MCF 10A (cell line): ENCODE measurements at regions of chr12 and their contacts with region 1.

Region 1: DNA sequence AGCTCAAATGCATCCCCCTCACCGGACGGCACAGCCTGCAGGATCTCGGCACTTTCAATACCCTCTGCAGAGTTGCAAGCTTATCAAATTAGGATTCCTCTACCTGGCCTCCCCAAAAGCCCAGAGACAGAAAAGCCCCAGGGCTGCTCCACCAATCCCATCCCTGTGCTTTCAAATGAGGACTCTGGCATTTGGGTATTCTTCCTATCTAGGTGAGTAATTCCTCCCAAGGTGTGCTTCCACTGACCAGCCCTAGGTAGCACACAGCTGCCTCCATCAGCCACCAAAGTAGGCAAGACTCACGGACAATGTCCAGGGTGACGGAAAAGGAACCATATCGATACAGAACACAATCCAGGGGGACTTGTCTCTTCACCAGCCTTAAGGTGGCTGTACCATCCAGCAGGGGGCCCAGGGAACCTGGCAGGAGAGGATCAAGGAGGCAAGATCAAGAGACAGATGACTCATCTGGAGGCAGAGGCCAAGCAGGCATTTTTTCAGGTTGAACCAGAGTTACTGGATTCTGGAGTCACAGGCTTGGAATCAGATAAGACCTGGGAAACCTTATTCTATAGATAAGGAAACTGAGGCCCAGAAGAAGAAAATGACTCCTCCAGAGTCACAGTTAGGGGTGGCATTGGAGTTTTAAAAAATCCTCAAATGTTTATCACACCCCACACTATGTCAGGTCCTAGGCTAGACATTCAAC is 9.9 kb downstream of the PMEL start:
- DNase-seq: peak; percentile 88
- H3K4me3 Mint-ChIP-seq: no peak overlapping the region
- H3K27ac Mint-ChIP-seq: peak overlapping the region; percentile 32
- H3K4me1 Mint-ChIP-seq: peaks cover 28% of the 10 kb centered on the region
- H3K27me3 Mint-ChIP-seq: no peaks in the 10 kb centered on the region
- CTCF ChIP-seq: peak; percentile 43

Region 2: GRCh38 chr12:55931780-55932550 is 24.0 kb before region 1 on chr12:
- CTCF ChIA-PET with region 1: interaction called, 10 read pairs
- POLR2A ChIA-PET with region 1: interaction called, 17 read pairs
- intact Hi-C with region 1: no loop called
- DNase-seq: no peak
- H3K4me3 Mint-ChIP-seq: peak overlapping the region; percentile 79
- H3K27ac Mint-ChIP-seq: peak overlapping the region; percentile 89
- H3K4me1 Mint-ChIP-seq: peaks cover 47% of the 10 kb centered on the region
- H3K27me3 Mint-ChIP-seq: no peaks in the 10 kb centered on the region
- CTCF ChIP-seq: no peak

Region 3: GRCh38 chr12:55940065-55940732 is 15.8 kb before region 1 on chr12:
- CTCF ChIA-PET with region 1: interaction called, 34 read pairs
- POLR2A ChIA-PET with region 1: interaction called, 10 read pairs
- intact Hi-C with region 1: no loop called
- DNase-seq: peak; percentile 91
- H3K4me3 Mint-ChIP-seq: peak overlapping the region; percentile 48
- H3K27ac Mint-ChIP-seq: peak overlapping the region; percentile 52
- H3K4me1 Mint-ChIP-seq: peaks cover 49% of the 10 kb centered on the region
- H3K27me3 Mint-ChIP-seq: no peaks in the 10 kb centered on the region
- CTCF ChIP-seq: peak; percentile 85

Region 4: DNA sequence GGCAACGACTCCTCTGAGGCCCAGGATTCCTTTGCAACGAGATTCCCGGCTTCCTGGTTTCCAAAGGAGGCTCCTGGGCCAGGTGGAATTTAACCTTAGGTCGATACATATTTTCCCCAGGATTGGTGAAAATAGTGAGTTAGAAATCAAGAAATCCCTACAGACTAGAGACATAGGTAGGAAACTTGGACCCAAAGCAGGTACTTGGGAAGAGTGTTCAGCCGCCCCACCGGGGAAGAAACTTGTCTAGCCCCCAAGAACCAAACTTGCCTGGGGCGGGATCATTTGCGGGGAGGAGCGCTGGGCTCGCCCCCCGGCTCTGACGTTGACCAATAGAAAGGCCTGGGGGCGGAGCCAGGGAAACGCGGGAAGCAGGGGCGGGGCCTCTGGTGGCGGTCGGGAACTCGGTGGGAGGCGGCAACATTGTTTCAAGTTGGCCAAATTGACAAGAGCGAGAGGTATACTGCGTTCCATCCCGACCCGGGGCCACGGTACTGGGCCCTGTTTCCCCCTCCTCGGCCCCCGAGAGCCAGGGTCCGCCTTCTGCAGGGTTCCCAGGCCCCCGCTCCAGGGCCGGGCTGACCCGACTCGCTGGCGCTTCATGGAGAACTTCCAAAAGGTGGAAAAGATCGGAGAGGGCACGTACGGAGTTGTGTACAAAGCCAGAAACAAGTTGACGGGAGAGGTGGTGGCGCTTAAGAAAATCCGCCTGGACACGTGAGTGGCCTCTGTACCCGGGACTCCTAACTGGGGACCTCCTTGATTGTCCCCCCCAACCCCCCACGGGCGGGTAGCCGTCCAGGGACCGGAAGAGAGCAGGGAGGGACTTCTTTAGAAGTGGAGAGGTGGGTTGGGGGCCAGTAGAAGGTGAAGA is 10.7 kb after region 1 on chr12 and contains the start of gene CDK2:
- CTCF ChIA-PET with region 1: interaction called, 7 read pairs
- POLR2A ChIA-PET with region 1: interaction called, 35 read pairs
- intact Hi-C with region 1: no loop called
- DNase-seq: peak; percentile 88
- H3K4me3 Mint-ChIP-seq: peak within 1 kb of the TSS; percentile 93
- H3K27ac Mint-ChIP-seq: peak within 1 kb of the TSS; percentile 95
- H3K4me1 Mint-ChIP-seq: peaks cover 28% of the 10 kb centered on the region
- H3K27me3 Mint-ChIP-seq: no peaks in the 10 kb centered on the region
- CTCF ChIP-seq: no peak
- total RNA-seq, gene CDK2: 17.9 and 23.8 TPM in 2 replicates